ENCODE measurements at regions of chr10 and their contacts with region 1.

Region 1: DNA sequence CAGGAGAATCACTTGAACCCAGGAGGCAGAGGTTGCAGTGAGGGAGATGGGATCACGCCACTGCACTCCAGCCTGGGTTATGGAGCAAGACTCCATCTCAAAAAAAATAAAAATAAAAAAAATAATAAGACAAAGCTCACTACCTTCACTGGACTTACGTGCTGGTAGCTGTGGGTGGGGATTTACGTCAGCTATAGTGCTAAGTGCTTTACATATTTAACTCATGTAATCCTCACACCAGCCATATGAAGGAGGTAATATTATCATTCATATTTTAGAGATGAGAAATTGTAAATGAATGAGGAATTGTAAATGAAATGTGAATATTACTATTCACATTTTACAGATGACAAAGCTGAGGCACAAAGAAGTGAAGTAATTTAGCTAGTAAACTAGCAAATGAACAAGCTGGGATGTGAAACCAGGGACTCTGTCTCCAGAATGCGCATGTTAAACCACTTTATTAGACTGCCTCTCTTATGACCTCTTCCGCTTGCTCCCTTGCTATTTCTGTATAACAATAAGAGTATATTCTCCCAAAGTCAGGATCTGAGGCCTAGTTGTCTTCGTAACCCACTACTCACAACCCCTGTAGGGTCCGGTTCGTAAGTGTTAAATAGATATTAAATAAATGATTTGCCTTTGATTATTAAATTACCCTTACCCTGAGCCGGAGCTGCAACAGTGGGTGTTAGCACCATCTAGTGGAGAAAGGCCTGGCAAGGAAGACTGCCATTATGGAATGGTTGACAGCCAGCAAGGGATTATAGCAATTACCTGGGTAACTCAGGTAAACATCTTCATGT is 70.2 kb downstream of the HTR7 start:
- H3K4me3 ChIP-seq: no peak overlapping the region
- H3K27ac ChIP-seq: no peak overlapping the region
- H3K4me1 ChIP-seq: no peaks in the 10 kb centered on the region
- CTCF ChIP-seq: peak; percentile 34

Region 2: DNA sequence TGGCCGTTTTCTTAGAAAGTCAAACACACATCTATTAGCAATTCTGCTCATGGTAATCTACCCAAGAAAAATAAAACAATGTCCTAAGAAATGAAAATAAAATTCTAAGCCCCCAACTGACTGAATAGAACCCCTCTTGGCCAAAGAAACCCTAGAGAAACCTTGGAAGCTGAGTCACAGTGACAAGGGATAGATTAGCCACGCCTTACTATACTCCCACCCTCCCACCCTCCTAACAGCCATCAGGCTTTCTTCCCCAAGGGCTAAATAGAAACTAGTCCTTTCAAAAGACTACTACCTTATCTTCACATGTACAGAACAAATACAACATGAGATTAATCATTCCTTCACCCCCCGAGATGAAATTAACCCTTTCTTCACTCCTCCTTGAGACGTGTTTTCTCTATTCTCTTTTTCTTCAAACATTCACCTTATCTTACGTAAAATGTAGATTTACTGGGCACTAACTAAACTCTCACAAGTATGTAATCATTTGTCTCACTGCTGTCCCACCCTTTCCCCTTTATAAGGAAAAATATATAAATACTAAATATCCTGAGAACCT is 12.7 kb after region 1 on chr10:
- CTCF ChIA-PET with region 1: interaction called, 18 read pairs
- POLR2A ChIA-PET with region 1: no interaction called
- H3K4me3 ChIP-seq: no peak overlapping the region
- H3K27ac ChIP-seq: no peak overlapping the region
- H3K4me1 ChIP-seq: no peaks in the 10 kb centered on the region
- CTCF ChIP-seq: no peak

Region 3: GRCh38 chr10:90865401-90865800 is 77.8 kb after region 1 on chr10:
- CTCF ChIA-PET with region 1: interaction called, 13 read pairs
- POLR2A ChIA-PET with region 1: no interaction called
- H3K4me3 ChIP-seq: no peak overlapping the region
- H3K27ac ChIP-seq: no peak overlapping the region
- H3K4me1 ChIP-seq: no peaks in the 10 kb centered on the region
- CTCF ChIP-seq: peak; percentile 13; the same call in 1 of the 2 replicates

Region 4: DNA sequence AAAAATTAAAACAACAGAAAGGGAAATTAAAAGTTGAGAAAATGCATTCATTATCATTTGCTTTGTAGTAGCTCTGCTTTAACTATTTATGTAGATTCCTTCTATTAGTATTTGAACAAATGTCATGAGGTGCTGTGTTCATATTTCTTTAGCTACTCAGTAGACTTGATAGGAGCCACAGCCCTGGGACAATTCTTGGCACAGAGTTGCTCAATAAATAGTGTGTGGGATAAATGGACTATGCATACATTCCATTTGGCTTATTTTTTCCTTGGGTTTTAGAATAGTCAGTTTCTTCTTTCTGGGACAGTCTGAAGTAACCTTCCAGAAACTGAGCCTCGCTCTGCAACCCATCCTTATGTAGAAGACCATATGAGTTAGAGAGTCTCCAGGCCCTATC is 97.6 kb after region 1 on chr10:
- CTCF ChIA-PET with region 1: no interaction called
- POLR2A ChIA-PET with region 1: no interaction called
- H3K4me3 ChIP-seq: no peak overlapping the region
- H3K27ac ChIP-seq: no peak overlapping the region
- H3K4me1 ChIP-seq: no peaks in the 10 kb centered on the region
- CTCF ChIP-seq: no peak

Measured in HEK293 (cell line).